ENCODE measurements at regions of chr7 and their contacts with region 1.

Region 1: DNA sequence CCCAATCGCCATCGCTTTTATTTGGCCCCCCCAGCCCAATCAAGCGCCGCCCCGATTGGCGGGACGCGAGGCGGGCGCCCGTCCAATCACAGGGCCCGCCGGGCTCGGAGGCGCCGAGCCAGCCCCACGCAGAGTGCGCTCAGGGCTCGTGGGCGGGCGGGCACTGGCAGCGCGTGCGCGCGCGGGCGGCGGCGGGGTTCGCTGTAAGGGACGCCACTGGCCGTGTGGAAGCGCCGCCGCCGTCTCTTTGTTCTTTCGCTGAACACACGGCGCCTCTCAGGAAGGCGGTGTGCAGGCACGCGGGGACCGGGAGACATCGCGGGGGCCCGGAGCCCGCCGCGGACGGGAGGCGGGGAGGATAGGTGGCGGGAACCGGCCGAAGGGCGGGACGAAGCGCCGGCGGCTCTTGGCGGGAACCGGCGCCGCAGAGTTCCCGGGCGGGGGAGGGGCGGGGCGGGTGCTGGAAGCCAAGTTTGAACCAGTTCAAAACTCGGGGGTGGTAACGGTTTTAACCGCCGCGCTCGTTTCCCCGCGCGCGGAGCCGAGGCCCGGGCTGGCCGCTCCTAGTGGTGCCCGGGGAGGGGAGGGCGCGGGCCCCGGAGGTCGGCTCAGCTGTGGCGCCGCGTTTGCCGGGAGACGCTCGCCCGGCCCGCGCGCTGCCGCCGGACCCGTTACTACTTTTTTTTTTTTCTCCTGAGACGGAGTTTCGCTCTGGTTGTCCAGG is 370 bp upstream of the EZH2 start:
- DNase-seq: peak; percentile 96
- H3K4me3 ChIP-seq: peak overlapping the region; percentile 74 to 97 (median 78)
- H3K27ac ChIP-seq: peak overlapping the region; percentile 91 to 95 (median 93)
- H3K4me1 ChIP-seq: peaks cover 0 to 11% (median 7%) of the 10 kb centered on the region in 4 donors
- H3K27me3 ChIP-seq: peaks cover 0 to 30% (median 10%) of the 10 kb centered on the region in 3 donors
- CTCF ChIP-seq: no peak
- EP300 ChIP-seq: no peak
- POLR2A ChIP-seq: peak in 1 of 2 donors; percentile 27

Region 2: DNA sequence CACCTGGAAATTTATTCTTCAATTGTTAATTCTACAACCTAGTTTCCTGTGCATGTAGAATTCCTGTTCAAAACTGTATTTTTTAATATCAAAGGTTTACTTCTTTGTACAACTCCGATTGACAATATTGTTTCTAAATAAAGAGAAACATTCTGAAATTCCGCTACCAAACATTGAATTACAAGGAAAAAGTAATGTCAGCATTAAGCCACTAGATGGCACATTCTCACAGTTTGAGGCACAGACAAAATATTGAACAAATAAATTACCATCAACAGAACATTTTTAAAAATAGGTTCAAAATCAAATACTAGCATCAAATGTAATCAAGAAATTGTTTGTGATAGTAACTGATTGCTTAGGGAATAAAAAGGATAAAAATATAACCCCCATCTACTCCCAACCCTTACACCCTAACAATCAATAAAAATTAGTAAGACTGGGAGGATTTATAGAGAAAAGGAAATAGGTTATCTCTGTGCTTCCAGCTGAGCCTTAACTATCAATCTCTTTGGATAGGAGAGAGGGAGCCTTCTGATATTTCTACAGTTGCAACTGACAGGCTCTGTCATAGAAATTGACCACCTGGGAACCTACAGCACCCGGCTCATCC is 380.5 kb before region 1 on chr7:
- intact Hi-C with region 1: loop called (anchors 10 kb)
- DNase-seq: no peak
- H3K4me3 ChIP-seq: no peak overlapping the region
- H3K27ac ChIP-seq: no peak overlapping the region
- H3K4me1 ChIP-seq: no peaks in the 10 kb centered on the region
- H3K27me3 ChIP-seq: peaks cover 0 to 29% (median 14%) of the 10 kb centered on the region in 3 donors
- CTCF ChIP-seq: peak; percentile 37 to 66 (median 58)
- EP300 ChIP-seq: no peak
- POLR2A ChIP-seq: no peak

Region 3: GRCh38 chr7:148940702-148941597 is 56.5 kb after region 1 on chr7:
- intact Hi-C with region 1: loop called (anchors 1 kb)
- DNase-seq: peak; percentile 90
- H3K4me3 ChIP-seq: peak overlapping the region; percentile 57 to 84 (median 73)
- H3K27ac ChIP-seq: peak overlapping the region; percentile 82 to 91 (median 86)
- H3K4me1 ChIP-seq: peaks cover 0 to 20% (median 7%) of the 10 kb centered on the region in 4 donors
- H3K27me3 ChIP-seq: no peaks in the 10 kb centered on the region
- CTCF ChIP-seq: no peak
- EP300 ChIP-seq: peak in 1 of 4 donors; percentile 4
- POLR2A ChIP-seq: no peak

Region 4: GRCh38 chr7:149028346-149029109 is 144.1 kb after region 1 on chr7 and contains the start of gene PDIA4:
- intact Hi-C with region 1: loop called (anchors 5 kb)
- DNase-seq: peak; percentile 100
- H3K4me3 ChIP-seq: peak within 1 kb of the TSS; percentile 59 to 90 (median 82)
- H3K27ac ChIP-seq: peak within 1 kb of the TSS; percentile 92 to 96 (median 95)
- H3K4me1 ChIP-seq: peaks cover 0 to 28% (median 23%) of the 10 kb centered on the region in 4 donors
- H3K27me3 ChIP-seq: no peaks in the 10 kb centered on the region
- CTCF ChIP-seq: peak in 2 of 4 experiments; percentile 26 to 29
- EP300 ChIP-seq: no peak
- POLR2A ChIP-seq: peak; percentile 42 to 60
- total RNA-seq, gene PDIA4: 34.3 to 47.4 (median 39.7) TPM

Region 5: DNA sequence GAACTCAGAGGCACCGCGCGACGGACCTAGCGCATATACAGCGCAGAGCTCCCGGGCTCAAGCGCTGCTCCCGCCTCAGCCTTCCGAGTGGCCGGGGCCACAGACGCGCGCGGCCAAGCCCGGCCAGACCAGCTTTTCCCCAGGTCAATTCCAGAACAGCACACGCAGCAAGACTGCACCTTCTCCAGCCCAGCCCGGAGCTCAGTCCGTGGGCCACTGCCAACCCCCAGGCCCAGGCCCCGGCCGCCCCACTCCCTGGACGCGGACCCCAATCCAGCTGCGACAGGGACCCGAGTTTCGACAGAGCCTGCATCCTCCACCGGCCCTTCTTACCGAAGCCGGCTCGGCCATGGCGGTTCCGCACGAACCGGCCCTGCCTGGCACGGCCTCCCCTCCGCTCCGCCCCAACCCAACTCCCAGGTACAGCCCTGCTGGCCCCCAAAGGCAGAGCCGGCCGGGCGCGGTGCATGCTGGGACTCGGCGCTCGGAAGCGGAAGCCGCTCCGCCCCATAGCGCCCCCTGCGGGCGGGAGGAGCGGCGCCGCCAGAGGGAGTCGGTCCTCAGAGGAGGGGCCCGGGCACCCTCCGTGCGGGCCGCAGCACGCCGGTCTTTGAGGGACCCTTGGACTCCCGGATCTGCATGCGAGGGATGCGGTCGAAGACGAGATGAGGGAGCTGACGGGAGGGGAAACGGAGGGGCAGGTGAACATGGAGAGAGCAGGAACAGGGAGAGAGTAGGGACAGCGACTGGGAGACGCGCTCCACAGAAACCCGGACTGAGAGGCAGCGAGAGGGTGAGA is 241.6 kb after region 1 on chr7 and contains the start of gene ZNF425:
- intact Hi-C with region 1: loop called (anchors 10 kb)
- DNase-seq: peak; percentile 95
- H3K4me3 ChIP-seq: peak within 1 kb of the TSS; percentile 87 to 99 (median 90)
- H3K27ac ChIP-seq: peak within 1 kb of the TSS; percentile 96 to 99 (median 97)
- H3K4me1 ChIP-seq: peaks cover 0 to 17% (median 13%) of the 10 kb centered on the region in 4 donors
- H3K27me3 ChIP-seq: no peaks in the 10 kb centered on the region
- CTCF ChIP-seq: peak; percentile 90 to 98 (median 96)
- EP300 ChIP-seq: no peak
- POLR2A ChIP-seq: peak; percentile 87 to 90
- total RNA-seq, gene ZNF425: 2.9 to 4.9 (median 3.6) TPM